ENCODE measurements at regions of chr12 and their contacts with region 1.

Region 1: DNA sequence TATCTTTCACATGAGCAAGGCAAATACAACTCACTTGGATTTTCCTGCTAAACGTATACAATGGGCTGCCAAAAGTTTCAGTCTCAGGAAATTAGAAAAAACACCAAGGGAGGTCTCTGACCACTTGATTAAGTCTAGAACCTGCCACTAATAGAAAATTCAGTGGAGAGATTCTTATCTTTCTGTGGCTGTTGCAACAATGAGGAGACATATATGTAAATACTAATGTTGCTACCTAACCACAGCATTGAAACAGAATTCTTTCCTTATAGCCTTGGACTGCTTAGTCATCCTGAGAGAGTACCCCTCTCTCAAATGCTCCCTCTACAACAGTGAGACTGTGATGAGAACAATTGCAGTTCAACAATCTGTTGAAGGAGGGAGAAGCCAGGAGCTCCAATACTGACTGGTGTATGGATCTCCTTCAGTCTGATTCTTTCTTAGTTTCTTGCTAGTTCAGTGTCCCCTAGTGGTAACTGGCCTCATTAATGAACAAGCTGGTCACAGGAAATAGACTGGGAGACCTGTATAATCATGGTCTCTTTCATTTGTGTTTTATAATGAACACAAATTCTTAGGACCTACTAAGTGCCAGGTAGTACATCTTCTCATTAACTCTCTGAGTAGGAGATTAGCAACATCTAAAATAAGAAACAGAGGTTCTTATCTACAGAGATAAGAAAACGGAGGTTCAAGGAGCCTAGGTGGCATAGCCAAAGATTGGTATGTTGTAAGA is 164.5 kb downstream of the SLC38A4 start:
- DNase-seq: no peak
- ATAC-seq: peak; percentile 94
- H3K4me3 Mint-ChIP-seq: peak overlapping the region; percentile 3
- H3K27ac Mint-ChIP-seq: no peak overlapping the region
- H3K4me1 Mint-ChIP-seq: peaks cover 31% of the 10 kb centered on the region
- H3K27me3 Mint-ChIP-seq: no peaks in the 10 kb centered on the region
- CTCF ChIP-seq: no peak

Region 2: GRCh38 chr12:45946435-45946834 is 714.8 kb before region 1 on chr12:
- CTCF ChIA-PET with region 1: no interaction called
- POLR2A ChIA-PET with region 1: no interaction called
- intact Hi-C with region 1: no loop called
- DNase-seq: no peak
- ATAC-seq: no peak
- H3K4me3 Mint-ChIP-seq: no peak overlapping the region
- H3K27ac Mint-ChIP-seq: no peak overlapping the region
- H3K4me1 Mint-ChIP-seq: no peaks in the 10 kb centered on the region
- H3K27me3 Mint-ChIP-seq: no peaks in the 10 kb centered on the region
- CTCF ChIP-seq: no peak

Region 3: DNA sequence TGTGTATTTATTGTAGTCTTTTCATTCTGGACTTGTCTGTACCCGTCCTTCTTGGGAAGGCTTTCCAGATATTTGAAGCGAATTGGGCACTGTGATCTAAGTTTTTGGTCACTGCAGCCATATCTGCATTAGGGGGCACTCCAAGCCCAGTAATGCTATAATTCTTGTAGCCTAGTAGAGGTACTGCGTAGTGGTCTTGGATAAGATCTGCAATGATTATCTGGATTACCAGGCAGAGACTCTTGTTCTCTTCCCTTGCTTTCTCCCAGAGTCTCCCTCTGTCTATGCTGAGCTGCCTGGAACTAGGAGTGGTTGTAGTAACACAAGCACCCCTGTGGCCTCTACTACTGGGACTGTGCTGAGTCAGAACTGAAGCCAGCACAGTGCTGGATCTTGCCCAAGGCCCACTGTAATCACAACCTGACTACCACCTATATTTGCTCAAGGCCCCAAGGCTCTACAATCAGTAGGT is 318.7 kb before region 1 on chr12:
- CTCF ChIA-PET with region 1: interaction called, 13 read pairs
- POLR2A ChIA-PET with region 1: no interaction called
- intact Hi-C with region 1: loop called (anchors 1 kb)
- DNase-seq: no peak
- ATAC-seq: peak; percentile 56
- H3K4me3 Mint-ChIP-seq: no peak overlapping the region
- H3K27ac Mint-ChIP-seq: no peak overlapping the region
- H3K4me1 Mint-ChIP-seq: peaks cover 2% of the 10 kb centered on the region
- H3K27me3 Mint-ChIP-seq: peaks cover 5% of the 10 kb centered on the region
- CTCF ChIP-seq: no peak

Region 4: DNA sequence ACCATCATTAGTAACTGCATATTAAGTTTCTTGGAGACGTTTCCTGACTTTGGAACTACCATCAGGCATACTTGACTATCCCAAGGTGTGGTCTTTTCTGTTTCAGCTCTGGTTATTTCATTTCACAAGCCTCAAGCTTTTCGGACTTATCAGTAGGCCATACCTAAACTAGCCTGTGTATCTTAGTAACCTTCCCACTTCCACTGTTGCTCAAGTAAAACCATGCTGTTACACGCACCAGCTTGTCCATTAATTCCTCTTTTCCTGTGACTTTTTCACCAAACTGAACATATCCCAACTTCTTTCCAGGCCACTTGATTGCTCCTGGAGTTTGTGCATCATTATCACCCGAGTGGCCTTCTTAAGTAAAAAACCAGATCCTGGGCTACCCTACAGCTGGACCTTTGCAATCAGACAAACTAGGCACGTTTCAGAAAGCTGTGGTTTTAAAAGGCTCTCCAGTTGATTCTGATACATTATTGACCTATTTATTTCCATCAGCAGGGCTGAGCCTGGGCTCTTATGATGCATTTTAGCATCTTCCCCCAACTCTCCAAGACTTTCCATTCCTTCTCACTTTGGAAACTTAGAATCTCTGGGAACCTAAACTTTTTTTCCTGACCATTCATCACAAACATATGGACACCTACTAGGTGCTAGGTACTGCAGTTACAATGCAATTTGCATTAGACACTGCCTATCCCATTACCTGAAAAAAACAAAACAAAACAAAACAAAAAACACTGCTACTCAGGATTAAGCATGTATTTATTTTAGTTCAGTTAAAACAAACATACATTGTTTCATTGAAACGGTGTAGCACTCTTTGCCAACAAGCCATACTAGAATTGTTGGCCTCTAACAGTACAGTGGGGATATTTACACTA is 303.6 kb before region 1 on chr12:
- CTCF ChIA-PET with region 1: interaction called, 6 read pairs
- POLR2A ChIA-PET with region 1: no interaction called
- intact Hi-C with region 1: loop called (anchors 1 kb)
- DNase-seq: no peak
- ATAC-seq: no peak
- H3K4me3 Mint-ChIP-seq: no peak overlapping the region
- H3K27ac Mint-ChIP-seq: no peak overlapping the region
- H3K4me1 Mint-ChIP-seq: peaks cover 32% of the 10 kb centered on the region
- H3K27me3 Mint-ChIP-seq: no peaks in the 10 kb centered on the region
- CTCF ChIP-seq: no peak

Region 5: DNA sequence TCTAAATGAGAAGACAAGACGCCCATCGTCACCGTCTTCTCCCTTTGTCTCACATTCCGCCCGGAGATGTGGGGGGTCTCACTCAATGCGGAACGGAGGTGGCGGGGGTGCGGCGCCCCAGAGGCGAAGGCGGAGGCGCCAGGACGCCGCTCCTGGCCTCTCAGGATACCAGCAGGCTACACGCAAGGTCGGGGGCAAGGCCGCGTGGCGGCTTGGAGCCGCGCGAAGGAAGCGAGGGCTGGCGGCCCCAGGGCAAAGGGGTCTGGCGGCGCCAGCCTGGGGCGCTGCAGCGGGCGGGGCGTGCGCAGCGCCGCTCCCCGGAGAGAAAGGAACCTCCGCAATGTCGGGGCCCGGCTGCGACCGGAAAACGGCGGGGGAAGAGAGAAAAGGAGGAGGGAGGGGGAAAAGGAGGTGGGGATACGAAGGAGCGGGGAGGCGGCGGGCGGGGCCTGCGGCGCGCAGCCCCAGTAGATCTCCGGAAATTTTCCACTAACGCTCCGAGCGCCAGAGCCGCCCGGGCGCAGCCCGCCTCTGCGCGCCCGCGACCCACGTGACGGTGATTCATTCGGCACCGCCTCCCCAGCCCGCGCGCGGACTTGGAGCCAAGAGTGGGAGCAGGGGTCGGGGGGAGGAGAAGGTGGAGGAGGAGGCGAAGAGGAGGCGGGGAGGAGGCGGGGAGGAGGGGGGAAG is 278.2 kb before region 1 on chr12:
- CTCF ChIA-PET with region 1: interaction called, 10 read pairs
- POLR2A ChIA-PET with region 1: interaction called, 6 read pairs
- intact Hi-C with region 1: no loop called
- DNase-seq: peak; percentile 92
- ATAC-seq: peak; percentile 69
- H3K4me3 Mint-ChIP-seq: peak overlapping the region; percentile 91
- H3K27ac Mint-ChIP-seq: peak overlapping the region; percentile 94
- H3K4me1 Mint-ChIP-seq: peaks cover 46% of the 10 kb centered on the region
- H3K27me3 Mint-ChIP-seq: no peaks in the 10 kb centered on the region
- CTCF ChIP-seq: no peak

Region 6: GRCh38 chr12:46523863-46524770 is 137.2 kb before region 1 on chr12:
- CTCF ChIA-PET with region 1: no interaction called
- POLR2A ChIA-PET with region 1: no interaction called
- intact Hi-C with region 1: no loop called
- DNase-seq: no peak
- ATAC-seq: no peak
- H3K4me3 Mint-ChIP-seq: no peak overlapping the region
- H3K27ac Mint-ChIP-seq: no peak overlapping the region
- H3K4me1 Mint-ChIP-seq: peaks cover under 1% of the 10 kb centered on the region
- H3K27me3 Mint-ChIP-seq: no peaks in the 10 kb centered on the region
- CTCF ChIP-seq: no peak

Region 7: DNA sequence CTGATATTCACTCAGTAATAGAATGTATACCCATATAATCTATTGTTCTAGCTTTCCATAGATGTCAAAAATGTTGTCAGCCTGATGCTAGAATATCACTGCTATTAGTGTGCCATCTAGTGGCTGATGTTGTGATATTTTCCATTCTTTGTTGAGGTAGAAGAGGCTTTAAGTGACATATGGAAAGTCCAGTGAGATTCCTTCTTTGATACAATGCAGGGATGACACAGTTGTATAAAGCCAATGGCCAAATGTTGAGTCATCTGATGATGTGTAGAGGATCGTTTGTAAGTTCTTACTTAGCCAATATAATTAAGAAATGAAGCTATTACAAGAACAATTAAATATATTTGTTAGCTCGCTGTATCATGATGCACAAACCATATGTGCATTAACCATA is 360.0 kb after region 1 on chr12:
- CTCF ChIA-PET with region 1: interaction called, 3 read pairs
- POLR2A ChIA-PET with region 1: no interaction called
- intact Hi-C with region 1: loop called (anchors 1 kb)
- DNase-seq: no peak
- ATAC-seq: no peak
- H3K4me3 Mint-ChIP-seq: no peak overlapping the region
- H3K27ac Mint-ChIP-seq: no peak overlapping the region
- H3K4me1 Mint-ChIP-seq: no peaks in the 10 kb centered on the region
- H3K27me3 Mint-ChIP-seq: peaks cover 3% of the 10 kb centered on the region
- CTCF ChIP-seq: peak; percentile 52

Measured in activated B cell treated with CpG ODN at 0.5 μM for 24 hours (primary cell).